Posterior cingulate gyrus (tissue), 11 donors: ENCODE measurements at regions of chr7 and their contacts with region 1.

Region 1: GRCh38 chr7:139133335-139134139 is 24.0 kb upstream of the ZC3HAV1 start:
- DNase-seq: peak; percentile 78 to 98 (median 86)

Region 2: GRCh38 chr7:139230774-139231512 is 97.4 kb after region 1 on chr7 and contains the start of gene UBN2:
- intact Hi-C with region 1: loop called (anchors 10 kb)
- DNase-seq: peak; percentile 97 to 100 (median 98)